ENCODE measurements at regions of chr2 and their contacts with region 1.

Region 1: DNA sequence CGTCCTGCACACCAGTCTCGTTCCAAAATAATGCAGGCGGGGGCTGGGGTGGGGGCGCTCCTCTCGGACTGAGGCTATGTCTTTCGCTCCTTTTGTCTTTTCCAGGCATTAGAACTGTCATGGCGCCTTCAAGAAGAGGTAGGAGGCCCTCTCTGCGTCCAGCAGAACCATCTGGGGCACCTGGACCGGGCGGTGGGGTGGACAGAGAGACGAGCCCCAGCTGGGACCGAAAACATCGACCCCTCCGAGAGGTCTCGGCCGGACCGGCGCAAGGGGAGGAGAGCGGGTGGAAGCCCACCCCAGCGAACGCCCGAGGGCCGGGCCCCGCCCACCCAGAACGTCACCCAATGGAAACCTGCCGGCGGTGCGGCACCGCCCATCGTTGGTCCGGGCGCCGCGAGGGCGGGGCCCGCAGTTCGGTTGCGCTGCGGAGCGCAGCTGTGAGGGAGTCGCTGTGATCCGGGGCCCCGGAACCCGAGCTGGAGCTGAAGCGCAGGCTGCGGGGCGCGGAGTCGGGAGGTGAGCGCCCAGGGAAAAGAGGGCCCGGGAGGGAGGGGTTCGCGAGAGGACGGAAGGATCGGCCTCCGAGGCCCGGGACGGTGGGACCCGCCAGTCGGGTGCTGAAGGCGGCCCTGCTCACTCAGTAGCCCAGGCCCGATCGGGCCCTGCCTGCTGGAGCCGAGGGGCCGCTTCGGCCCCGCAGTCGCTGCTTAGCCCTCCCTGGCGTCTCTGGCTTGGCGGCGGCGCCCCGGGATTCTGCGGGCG is at the start of gene NRBP1:
- DNase-seq: peak; percentile 86 to 98 (median 95)

Region 2: DNA sequence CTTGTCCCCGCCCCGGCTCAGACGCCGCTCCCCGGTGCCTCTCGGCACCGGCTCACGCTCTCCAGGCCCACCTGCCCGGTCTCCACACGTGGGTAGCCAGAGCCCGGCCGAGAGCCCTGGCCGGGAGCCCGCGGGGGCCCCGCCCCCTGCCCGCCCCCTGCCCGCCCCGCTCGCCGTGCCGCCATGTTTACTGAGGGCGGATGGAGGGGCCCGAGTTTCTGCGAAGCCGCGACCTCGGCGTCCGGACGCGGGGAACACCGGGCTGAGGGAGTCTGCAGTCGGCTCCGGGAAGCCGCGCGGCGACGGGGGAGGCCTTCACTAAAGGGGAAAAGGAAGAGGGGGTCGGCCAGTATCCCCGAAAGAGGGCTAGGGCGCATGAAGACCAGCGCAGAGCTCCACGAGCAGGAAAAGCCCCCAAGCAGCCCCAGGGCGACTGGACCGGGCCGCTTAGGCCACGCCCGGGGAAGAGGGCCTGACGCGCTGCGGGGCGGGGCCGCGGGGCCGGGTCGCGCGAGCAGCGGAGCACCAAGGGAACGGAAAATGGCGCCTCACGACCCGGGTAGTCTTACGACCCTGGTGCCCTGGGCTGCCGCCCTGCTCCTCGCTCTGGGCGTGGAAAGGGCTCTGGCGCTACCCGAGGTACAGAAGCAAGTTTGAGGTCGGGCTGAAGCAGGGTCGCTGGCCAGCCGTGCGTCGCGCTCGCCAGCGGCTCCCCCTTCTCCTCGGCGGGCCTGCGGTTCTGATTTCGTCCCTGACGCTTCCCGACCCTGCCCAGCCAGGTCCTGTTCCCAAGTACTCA is 216.4 kb before region 1 on chr2 and contains the starts of genes ATRAID and SLC5A6:
- intact Hi-C with region 1: loop called (anchors 5 kb)
- DNase-seq: peak; percentile 65 to 95 (median 91)

Region 3: DNA sequence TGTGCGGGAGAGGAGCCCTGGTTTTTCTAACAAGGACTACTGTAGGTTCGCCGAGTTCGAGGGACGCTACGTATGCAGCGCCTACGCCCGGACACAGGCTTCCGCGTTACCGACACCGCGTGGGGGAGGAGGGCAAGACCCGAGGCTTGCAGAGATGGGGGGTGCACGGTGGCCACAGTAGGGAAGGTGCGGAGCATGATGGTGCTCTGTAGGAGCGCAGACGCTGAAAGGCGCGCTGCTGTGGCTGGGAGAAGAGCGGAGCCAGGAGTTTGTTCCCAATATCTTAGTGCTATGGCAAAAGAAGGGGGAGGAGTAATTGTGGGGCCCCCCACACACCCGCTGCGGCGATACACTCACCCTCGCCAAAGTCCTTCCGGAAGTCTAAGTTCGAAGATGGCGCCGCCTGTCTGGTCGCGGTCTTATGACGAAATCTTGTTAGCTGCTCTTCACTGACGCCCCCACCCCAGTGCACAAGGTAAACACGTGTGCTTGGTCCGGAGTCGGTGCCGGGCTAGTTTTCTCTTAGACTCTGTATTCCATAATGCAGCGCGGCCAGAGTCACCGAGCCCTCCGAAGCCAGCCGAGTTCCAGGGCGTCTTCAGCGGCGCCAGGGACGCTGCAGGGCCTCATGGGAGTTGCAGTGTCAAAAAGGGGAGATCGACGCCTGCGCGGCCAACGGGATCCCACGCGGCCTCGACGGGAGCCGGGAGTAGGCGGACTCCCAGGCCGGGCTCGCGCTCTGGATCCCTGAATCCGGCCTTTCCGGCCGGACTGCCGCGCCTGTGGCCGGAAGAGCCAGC is 71.8 kb before region 1 on chr2 and contains the start of gene GTF3C2:
- intact Hi-C with region 1: loop called (anchors 2 kb)
- DNase-seq: peak; percentile 88 to 98 (median 95)

Region 4: DNA sequence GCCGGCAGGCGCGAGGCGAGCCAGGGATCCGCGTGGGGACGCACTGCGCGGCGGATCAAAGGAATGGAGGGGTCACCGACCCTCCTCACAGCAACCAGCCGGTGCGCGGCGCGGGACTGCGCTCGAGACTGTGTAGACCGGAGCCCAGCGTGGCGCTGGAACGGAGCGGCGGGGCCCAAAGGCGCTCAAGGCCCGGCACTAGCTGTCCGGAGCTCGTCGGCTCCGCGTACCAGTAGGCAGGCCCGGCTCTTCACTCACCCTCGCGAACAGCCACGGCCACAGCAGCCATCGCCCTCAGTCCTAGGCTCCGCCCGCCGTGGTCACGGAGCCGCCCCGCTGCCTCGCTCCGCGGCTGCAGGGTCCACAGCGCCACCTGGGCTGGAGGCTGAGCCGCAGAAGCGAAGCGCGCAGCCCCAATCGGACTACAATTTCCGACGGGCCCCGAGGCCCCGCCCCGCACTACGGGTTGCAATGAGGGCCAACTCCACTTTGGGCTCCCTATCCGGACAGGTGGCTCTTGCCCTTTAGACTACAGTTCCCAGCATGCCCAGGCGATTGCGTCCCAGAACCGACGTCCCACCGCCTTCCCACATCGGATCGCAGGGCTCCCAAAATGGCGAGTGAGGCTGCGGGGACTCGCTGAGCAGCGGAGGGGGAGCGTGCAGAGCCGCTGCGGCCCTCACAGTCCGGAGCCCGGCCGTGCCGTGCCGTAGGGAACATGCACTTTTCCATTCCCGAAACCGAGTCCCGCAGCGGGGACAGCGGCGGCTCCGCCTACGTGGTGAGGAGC is 58.2 kb before region 1 on chr2 and contains the starts of genes EIF2B4 and SNX17:
- intact Hi-C with region 1: loop called (anchors 5 kb)
- DNase-seq: peak; percentile 97 to 100 (median 100)

Region 5: DNA sequence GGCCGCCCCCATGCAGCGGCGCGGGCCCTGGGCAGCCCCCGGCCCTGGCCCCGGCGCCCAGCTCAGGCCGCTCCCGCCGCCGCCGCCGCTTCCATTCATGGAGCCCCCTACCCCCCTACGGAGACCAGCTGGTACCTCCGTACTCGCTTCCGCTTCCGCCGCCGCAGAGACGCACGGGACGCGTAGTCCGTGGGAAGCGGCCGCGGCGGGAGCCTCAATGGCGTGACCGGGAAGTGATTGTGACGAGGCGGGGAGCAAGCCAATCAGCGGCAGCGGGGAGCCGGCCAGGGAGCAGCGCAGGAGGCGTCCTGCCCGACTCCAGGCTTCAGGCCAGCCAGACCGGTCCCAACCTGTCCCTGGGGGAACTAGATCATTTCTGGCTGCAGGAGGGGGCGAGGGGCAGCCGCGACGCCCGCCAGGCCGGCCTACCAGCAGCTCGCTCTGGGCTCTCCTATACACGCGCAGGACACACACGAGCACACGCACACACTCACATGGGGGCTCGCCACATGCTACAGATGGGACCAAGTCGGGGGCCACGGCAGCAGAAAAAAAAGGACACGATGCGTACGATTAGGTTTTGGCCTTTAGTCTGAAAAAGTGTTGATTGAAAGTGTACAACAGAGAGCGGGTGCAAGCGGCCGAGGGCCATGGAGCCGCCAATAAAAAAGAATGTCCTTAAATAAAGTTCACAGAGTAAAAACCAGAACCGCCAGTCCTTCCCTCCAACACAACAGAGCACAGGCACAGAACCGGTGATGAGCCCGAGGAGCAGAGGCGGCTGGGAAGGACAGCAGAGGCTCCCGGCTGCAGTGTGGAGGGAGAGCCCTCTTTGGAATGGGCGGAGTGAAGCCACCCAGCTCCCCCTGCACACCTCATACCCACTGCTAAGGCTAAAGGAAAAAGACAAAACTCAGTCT is 47.5 kb before region 1 on chr2 and contains the start of gene ZNF513:
- intact Hi-C with region 1: no loop called
- DNase-seq: peak; percentile 95 to 99 (median 98)

Region 6: DNA sequence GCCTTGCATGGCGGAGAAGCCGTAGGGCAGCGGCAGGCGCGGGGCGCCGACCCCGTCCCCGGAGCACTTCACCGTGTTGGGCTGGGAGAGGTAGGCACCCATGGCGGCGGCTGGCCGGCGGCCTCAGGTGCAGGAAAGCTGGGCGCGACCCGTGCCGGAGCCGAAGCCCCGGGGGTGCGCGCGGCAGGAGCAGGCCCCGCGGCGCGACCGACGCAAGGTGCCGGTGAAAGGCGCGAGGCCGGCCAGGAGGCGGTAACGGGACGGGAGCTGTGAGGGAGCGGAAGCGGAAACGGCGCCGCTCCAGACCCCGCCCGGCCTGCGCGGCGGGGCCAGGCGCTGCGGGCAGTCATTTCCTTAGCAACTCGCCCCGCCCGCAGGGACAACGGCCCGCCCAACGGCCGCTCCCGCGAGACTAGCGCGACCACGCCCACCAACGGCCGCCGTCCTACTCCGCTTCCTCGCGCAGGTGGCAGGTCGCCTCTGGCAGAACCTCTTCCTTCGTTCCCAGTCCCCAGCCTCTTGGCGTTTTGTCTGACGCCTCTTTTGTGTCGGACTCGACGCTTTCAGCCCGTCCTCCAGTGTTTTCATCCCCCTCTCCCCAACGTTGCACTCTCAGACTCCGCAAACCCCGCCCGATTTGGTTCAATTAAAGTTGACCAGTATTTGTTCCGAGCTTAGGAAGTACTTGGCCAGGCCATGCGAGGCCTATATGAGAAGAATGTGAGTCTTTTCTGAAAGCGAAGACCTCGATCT is 18.9 kb before region 1 on chr2 and contains the start of gene PPM1G:
- intact Hi-C with region 1: loop called (anchors 2 kb)
- DNase-seq: peak; percentile 90 to 99 (median 98)

Region 7: GRCh38 chr2:27489498-27490397 is 61.4 kb after region 1 on chr2 and contains the start of gene IFT172:
- intact Hi-C with region 1: loop called (anchors 5 kb)
- DNase-seq: peak; percentile 97 to 99 (median 99)